HepG2 (cell line): ENCODE measurements at regions of chr2 and their contacts with region 1.

Region 1: DNA sequence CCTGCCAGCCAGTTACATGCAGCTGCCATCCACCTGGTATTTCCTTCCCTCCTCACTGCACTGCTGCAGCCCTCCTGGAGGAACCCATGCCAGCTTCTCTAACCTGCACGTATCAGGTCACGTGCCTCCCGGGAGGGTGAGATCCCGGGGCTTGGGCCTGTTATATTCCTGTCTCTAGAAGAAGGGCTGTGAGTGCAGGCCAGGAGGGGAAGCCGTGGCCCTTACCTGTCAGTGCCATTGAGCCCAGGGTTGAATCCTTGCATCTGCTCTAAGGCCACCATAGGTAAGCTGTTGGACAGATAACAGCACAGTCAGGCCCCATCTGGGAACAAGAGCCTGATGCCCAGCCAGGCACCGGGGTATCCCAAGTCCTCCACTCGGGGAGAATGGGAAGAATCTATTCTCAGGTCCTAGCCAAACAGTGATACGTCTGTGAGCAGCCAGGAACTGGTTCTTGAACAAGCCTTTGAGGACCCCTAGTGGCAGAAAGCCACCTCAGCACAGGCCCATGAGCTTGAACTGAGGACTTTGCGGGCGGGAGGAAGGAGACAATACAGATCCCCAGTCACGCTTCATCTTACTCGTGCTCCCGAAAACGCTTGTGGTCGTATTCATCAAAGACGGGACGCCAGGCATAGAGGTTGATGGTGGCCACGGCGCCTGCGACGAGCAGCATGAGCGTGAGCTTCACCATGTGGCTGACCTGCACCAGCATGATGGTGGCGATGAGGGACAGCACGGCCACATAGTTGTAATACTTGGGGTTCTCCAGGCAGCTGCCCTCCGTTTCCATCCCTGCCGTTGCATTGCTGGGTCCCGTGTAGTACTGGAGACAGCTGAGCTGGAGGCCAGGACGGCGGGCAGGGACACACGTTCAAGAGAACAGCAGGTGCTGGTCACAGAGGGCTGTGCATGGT is 34.4 kb downstream of the CENPO start:
- DNase-seq: peak; percentile 84
- ATAC-seq: peak; percentile 88
- H3K4me3 ChIP-seq: peak overlapping the region; percentile 20 to 73 (median 20); a peak in 5 of 6 replicates
- H3K27ac ChIP-seq: no peak overlapping the region
- H3K4me1 ChIP-seq: peaks cover 21% of the 10 kb centered on the region
- H3K27me3 ChIP-seq: peaks cover 2 to 12% of the 10 kb centered on the region in 2 experiments; a peak in 3 of 5 replicates
- CTCF ChIP-seq: peak; percentile 99
- EP300 ChIP-seq: no peak; a peak in 1 of 4 replicates
- POLR2A ChIP-seq: peak in 1 of 2 experiments; percentile 29; a peak in 1 of 4 replicates
- RAD21 ChIP-seq: peak; percentile 88

Region 2: GRCh38 chr2:24404491-24404921 is 423.1 kb before region 1 on chr2:
- CTCF ChIA-PET with region 1: interaction called, 43 read pairs
- POLR2A ChIA-PET with region 1: interaction called, 3 read pairs
- in situ Hi-C with region 1: loop called (anchors 5 kb)
- intact Hi-C with region 1: no loop called
- DNase-seq: no peak
- ATAC-seq: no peak
- H3K4me3 ChIP-seq: no peak overlapping the region
- H3K27ac ChIP-seq: no peak overlapping the region
- H3K4me1 ChIP-seq: peaks cover 36% of the 10 kb centered on the region
- H3K27me3 ChIP-seq: no peaks in the 10 kb centered on the region
- CTCF ChIP-seq: no peak
- EP300 ChIP-seq: no peak
- POLR2A ChIP-seq: no peak
- RAD21 ChIP-seq: no peak

Region 3: GRCh38 chr2:24409700-24410556 is 417.7 kb before region 1 on chr2:
- CTCF ChIA-PET with region 1: interaction called, 43 read pairs
- POLR2A ChIA-PET with region 1: no interaction called
- in situ Hi-C with region 1: no loop called
- intact Hi-C with region 1: loop called (anchors 1 kb)
- DNase-seq: peak; percentile 71
- ATAC-seq: peak; percentile 89
- H3K4me3 ChIP-seq: no peak overlapping the region
- H3K27ac ChIP-seq: no peak overlapping the region
- H3K4me1 ChIP-seq: 0 out of 2 replicates have a peak, but pooled peaks cover 4% of the 10 kb centered on the region
- H3K27me3 ChIP-seq: no peaks in the 10 kb centered on the region
- CTCF ChIP-seq: peak; percentile 90
- EP300 ChIP-seq: no peak
- POLR2A ChIP-seq: no peak
- RAD21 ChIP-seq: peak; percentile 65

Region 4: DNA sequence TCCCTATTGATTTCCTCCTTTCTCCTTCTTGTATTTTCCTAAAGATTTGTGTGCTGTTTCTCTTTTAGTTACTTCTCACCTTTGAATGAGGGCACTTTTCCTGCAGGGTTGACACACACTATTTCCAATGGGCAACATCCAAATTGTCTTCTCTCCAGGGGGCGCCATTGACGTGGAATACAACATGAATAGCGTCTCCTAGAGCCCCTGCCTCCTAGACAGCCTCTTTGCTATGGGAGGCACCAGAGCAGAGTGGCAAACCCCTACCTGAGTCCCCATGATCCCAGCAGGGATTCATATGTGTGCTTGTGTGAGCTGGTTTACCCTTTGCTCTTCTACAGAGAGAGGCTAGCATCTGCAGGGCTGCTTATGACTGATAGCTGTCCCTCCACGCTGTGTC is 405.9 kb before region 1 on chr2:
- CTCF ChIA-PET with region 1: interaction called, 16 read pairs
- POLR2A ChIA-PET with region 1: no interaction called
- in situ Hi-C with region 1: no loop called
- intact Hi-C with region 1: loop called (anchors 1 kb)
- DNase-seq: peak; percentile 52
- ATAC-seq: peak; percentile 88
- H3K4me3 ChIP-seq: no peak overlapping the region
- H3K27ac ChIP-seq: no peak overlapping the region
- H3K4me1 ChIP-seq: peaks cover 6% of the 10 kb centered on the region; the same call in 1 of the 2 replicates
- H3K27me3 ChIP-seq: 0 out of 5 replicates have a peak, but pooled peaks cover 0 to 4% of the 10 kb centered on the region in 2 experiments
- CTCF ChIP-seq: peak; percentile 82
- EP300 ChIP-seq: no peak
- POLR2A ChIP-seq: no peak
- RAD21 ChIP-seq: no peak; the same call in 1 of the 2 replicates

Region 5: DNA sequence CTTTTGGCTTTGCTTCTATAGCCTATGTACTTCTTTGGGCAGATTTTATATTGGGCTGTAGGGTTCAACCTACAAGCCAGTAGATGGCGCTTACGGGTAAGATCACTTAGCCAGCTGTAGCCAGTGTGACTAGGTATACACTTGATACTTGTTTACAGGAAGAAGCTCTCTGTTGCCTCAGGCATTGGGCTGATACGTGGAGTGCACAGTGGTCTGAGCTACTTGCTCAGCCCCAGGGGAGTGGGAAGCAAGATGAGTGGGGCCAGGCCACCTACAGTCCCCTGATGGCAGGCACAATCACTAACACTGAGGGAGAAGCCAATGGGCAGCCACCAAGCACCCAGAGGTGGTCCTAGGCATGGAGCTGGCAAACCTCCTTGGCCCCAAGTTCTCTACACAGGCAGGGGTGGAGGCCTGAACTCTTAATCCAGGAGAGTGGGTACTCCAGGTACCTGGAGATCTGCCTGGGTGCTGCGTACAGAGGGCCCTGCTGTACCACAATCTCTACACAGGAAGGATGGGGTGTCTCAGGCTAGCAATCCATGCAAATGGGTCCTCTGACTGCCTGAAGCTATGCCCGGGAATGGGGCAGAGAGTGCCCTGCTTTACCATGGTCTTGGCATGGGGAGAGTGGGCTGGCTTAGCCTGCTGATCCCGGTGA is 214.3 kb before region 1 on chr2:
- CTCF ChIA-PET with region 1: interaction called, 6 read pairs
- POLR2A ChIA-PET with region 1: no interaction called
- in situ Hi-C with region 1: loop called (anchors 5 kb)
- intact Hi-C with region 1: loop called (anchors 1 kb)
- DNase-seq: peak; percentile 54
- ATAC-seq: peak; percentile 93
- H3K4me3 ChIP-seq: no peak overlapping the region
- H3K27ac ChIP-seq: no peak overlapping the region
- H3K4me1 ChIP-seq: no peaks in the 10 kb centered on the region
- H3K27me3 ChIP-seq: no peaks in the 10 kb centered on the region
- CTCF ChIP-seq: peak; percentile 71
- EP300 ChIP-seq: no peak
- POLR2A ChIP-seq: no peak
- RAD21 ChIP-seq: peak; percentile 25; the same call in 1 of the 2 replicates

Region 6: GRCh38 chr2:24792874-24793760 is 34.5 kb before region 1 on chr2 and contains the starts of genes CENPO and PTRHD1:
- CTCF ChIA-PET with region 1: interaction called, 25 read pairs
- POLR2A ChIA-PET with region 1: interaction called, 10 read pairs
- in situ Hi-C with region 1: no loop called
- intact Hi-C with region 1: loop called (anchors 1 kb)
- DNase-seq: peak; percentile 98
- ATAC-seq: peak; percentile 93
- H3K4me3 ChIP-seq: peak within 1 kb of the TSS; percentile 85 to 95 (median 86)
- H3K27ac ChIP-seq: peak within 1 kb of the TSS; percentile 94
- H3K4me1 ChIP-seq: peaks cover 46% of the 10 kb centered on the region
- H3K27me3 ChIP-seq: no peaks in the 10 kb centered on the region; a peak in 1 of 5 replicates
- CTCF ChIP-seq: peak; percentile 97
- EP300 ChIP-seq: peak in 1 of 2 experiments; percentile 19; a peak in 1 of 4 replicates
- POLR2A ChIP-seq: peak; percentile 72 to 96
- RAD21 ChIP-seq: peak; percentile 91
- total RNA-seq, gene CENPO: 35.5 and 41.4 TPM in 2 replicates
- total RNA-seq, gene PTRHD1: 69.1 and 72.6 TPM in 2 replicates